Aorta (tissue), 5 donors: ENCODE measurements at regions of chr5 and their contacts with region 1.

Region 1: GRCh38 chr5:149960272-149961185 is at the start of gene SLC26A2:
- DNase-seq: peak; percentile 99
- ATAC-seq: peak; percentile 100
- H3K4me3 ChIP-seq: peak within 1 kb of the TSS; percentile 45 to 91
- H3K27ac ChIP-seq: peak within 1 kb of the TSS; percentile 64 to 75
- H3K4me1 ChIP-seq: no peaks in the 10 kb centered on the region
- H3K27me3 ChIP-seq: no peaks in the 10 kb centered on the region
- total RNA-seq, gene SLC26A2: 14.0 to 16.1 TPM

Region 2: DNA sequence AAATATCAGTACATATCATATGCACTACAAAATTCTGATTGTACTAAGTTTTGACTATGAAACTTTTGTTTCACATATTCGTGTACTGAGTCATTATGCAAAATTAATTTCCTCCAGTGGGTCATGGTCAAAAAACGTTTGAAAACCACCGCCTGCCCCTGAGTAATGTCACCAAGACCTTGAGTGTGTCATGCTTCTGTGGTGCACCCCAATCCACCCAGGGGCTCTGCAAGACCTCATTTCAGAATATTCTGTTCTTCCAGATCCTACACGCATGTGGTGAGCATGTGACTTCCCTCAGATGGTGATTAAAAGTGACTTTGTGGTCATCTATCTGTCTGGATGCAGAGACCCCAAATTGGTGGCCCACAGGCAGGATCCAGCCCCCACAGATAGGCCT is 788.3 kb before region 1 on chr5:
- intact Hi-C with region 1: loop called in 1 of 2 experiments (anchors 10 kb)
- DNase-seq: no peak
- ATAC-seq: no peak
- H3K4me3 ChIP-seq: no peak overlapping the region
- H3K27ac ChIP-seq: peak overlapping the region in 1 of 2 donors; percentile 34
- H3K4me1 ChIP-seq: peaks cover 0 to 10% of the 10 kb centered on the region in 2 donors
- H3K27me3 ChIP-seq: no peaks in the 10 kb centered on the region

Region 3: GRCh38 chr5:149834246-149834855 is 126.2 kb before region 1 on chr5:
- intact Hi-C with region 1: loop called (anchors 2 kb)
- DNase-seq: peak; percentile 58 to 61
- ATAC-seq: no peak
- H3K4me3 ChIP-seq: no peak overlapping the region
- H3K27ac ChIP-seq: no peak overlapping the region
- H3K4me1 ChIP-seq: no peaks in the 10 kb centered on the region
- H3K27me3 ChIP-seq: no peaks in the 10 kb centered on the region

Region 4: GRCh38 chr5:149852641-149853330 is 107.7 kb before region 1 on chr5:
- intact Hi-C with region 1: loop called (anchors 5 kb)
- DNase-seq: peak; percentile 81 to 87
- ATAC-seq: peak; percentile 71
- H3K4me3 ChIP-seq: no peak overlapping the region
- H3K27ac ChIP-seq: no peak overlapping the region
- H3K4me1 ChIP-seq: no peaks in the 10 kb centered on the region
- H3K27me3 ChIP-seq: no peaks in the 10 kb centered on the region

Region 5: GRCh38 chr5:149915392-149916260 is 44.9 kb before region 1 on chr5:
- intact Hi-C with region 1: loop called (anchors 5 kb)
- DNase-seq: no peak
- ATAC-seq: no peak
- H3K4me3 ChIP-seq: no peak overlapping the region
- H3K27ac ChIP-seq: peak overlapping the region in 1 of 2 donors; percentile 67
- H3K4me1 ChIP-seq: peaks cover 7% of the 10 kb centered on the region in 2 donors
- H3K27me3 ChIP-seq: no peaks in the 10 kb centered on the region

Region 6: DNA sequence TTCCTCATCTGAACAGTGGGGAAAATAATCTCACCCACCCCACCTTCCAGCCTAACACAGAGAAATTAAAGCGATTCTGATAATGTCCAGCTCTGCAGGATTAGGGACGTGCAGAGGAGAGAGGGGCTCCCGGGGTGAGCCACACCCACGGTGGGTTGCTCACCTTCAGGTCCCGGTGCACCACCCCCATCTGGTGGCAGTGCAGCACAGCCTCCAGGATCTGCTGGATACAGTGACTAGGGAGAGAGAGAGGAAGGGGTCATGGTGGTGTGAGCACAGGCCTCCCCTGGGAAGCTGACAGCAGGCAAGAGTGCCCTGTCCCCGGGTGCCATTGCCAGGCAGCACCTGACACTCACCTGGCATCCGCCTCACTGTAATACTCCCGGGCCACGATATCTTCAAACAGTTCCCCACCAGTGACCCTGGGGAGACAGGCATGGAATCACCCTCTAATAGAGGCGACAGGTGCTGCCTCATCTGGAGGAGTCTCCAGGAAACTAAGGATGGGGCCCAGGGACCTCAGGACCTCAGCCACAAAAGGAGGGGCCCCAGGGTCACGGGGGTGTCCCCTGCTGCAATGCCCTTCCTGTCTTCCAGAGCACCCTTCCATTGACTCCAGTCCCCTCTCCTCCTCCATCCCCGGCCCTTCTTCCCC is 296.0 kb after region 1 on chr5:
- intact Hi-C with region 1: no loop called
- DNase-seq: peak in 1 of 2 donors; percentile 39
- ATAC-seq: peak; percentile 36
- H3K4me3 ChIP-seq: no peak overlapping the region
- H3K27ac ChIP-seq: no peak overlapping the region
- H3K4me1 ChIP-seq: no peaks in the 10 kb centered on the region
- H3K27me3 ChIP-seq: no peaks in the 10 kb centered on the region